ENCODE measurements at regions of chr1 and their contacts with region 1.

Region 1: GRCh38 chr1:23800400-23801337 is at the start of gene GALE:
- DNase-seq: peak; percentile 98
- H3K4me3 ChIP-seq: peak within 1 kb of the TSS; percentile 64 to 87 (median 85)
- H3K27ac ChIP-seq: peak within 1 kb of the TSS; percentile 91 to 96 (median 94)
- H3K4me1 ChIP-seq: peaks cover 14 to 40% (median 28%) of the 10 kb centered on the region in 4 donors
- H3K27me3 ChIP-seq: no peaks in the 10 kb centered on the region
- CTCF ChIP-seq: no peak
- EP300 ChIP-seq: no peak
- POLR2A ChIP-seq: peak; percentile 88
- total RNA-seq, gene GALE: 28.5 to 166 (median 124) TPM

Region 2: GRCh38 chr1:23867953-23868556 is 67.4 kb after region 1 on chr1 and contains the start of gene FUCA1:
- in situ Hi-C with region 1: loop called in 1 of 4 experiments (anchors 10 kb)
- intact Hi-C with region 1: loop called (anchors 10 kb)
- DNase-seq: peak; percentile 97
- H3K4me3 ChIP-seq: peak within 1 kb of the TSS; percentile 64 to 89 (median 78)
- H3K27ac ChIP-seq: peak within 1 kb of the TSS; percentile 76 to 88 (median 84)
- H3K4me1 ChIP-seq: peaks cover 2 to 29% (median 20%) of the 10 kb centered on the region in 4 donors
- H3K27me3 ChIP-seq: no peaks in the 10 kb centered on the region
- CTCF ChIP-seq: peak; percentile 95 to 98 (median 97)
- EP300 ChIP-seq: no peak
- POLR2A ChIP-seq: peak; percentile 82
- total RNA-seq, gene FUCA1: 30.4 to 231 (median 92.9) TPM

Region 3: GRCh38 chr1:23916209-23917131 is 115.8 kb after region 1 on chr1:
- in situ Hi-C with region 1: loop called in 1 of 4 experiments (anchors 25 kb)
- intact Hi-C with region 1: no loop called
- DNase-seq: peak; percentile 81
- H3K4me3 ChIP-seq: no peak overlapping the region
- H3K27ac ChIP-seq: peak overlapping the region in 3 of 4 donors; percentile 19 to 32 (median 31)
- H3K4me1 ChIP-seq: peaks cover 9 to 52% (median 22%) of the 10 kb centered on the region in 4 donors
- H3K27me3 ChIP-seq: no peaks in the 10 kb centered on the region
- CTCF ChIP-seq: peak; percentile 64 to 76 (median 67)
- EP300 ChIP-seq: no peak
- POLR2A ChIP-seq: no peak